WTC11 (cell line): ENCODE measurements at regions of chr14 and their contacts with region 1.

Region 1: DNA sequence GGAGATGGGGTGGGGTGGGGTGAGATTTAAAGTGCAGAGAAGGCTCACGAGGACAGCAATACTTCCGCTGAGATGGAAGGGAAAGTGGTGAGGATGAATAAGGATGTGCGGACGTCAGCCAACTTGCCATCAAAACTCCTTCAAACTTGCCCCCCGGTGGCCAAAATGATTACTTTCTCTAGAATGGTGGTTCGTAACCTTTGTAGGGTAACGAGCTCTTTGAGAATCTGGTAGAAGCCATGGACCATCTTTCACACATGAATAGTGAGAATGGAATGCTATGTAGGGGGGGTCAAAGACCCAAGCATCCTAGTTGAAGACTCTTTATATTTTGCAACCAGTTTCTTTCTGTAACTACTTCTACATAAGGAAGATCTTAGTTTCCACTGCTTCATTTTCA is 245.9 kb upstream of the DDHD1 start:
- DNase-seq: peak; percentile 58
- ATAC-seq: peak; percentile 83
- H3K4me3 Mint-ChIP-seq: no peak overlapping the region
- H3K27ac Mint-ChIP-seq: no peak overlapping the region
- H3K4me1 Mint-ChIP-seq: 0 out of 2 replicates have a peak, but pooled peaks cover 5% of the 10 kb centered on the region
- H3K27me3 Mint-ChIP-seq: peaks cover 8% of the 10 kb centered on the region
- CTCF ChIP-seq: no peak

Region 2: DNA sequence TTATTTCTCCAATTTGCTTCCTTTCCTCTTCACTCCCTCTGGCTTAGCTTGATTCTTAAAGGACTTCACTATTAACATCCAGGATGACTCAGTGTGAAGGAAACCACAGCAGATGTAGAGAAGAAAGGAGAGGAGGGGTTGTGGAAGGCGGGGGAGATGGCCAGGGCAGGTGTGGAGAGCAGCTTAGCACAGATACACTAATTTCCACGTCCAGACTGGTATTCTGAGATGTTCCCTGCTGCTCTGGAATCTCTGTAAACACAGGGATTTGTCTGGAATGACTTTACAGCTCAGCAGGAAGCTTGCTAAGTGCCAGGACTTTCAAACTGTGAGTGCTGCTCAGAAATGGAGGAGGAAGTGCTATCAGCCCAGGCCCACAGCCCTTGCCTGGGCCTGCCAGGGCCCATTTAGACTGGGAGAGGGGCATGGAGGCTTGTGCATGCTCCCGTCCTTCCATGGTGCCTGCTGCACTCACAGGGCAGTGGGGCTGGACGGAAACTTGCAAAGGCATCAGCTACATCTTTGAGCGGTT is 43.4 kb before region 1 on chr14:
- CTCF ChIA-PET with region 1: interaction called, 21 read pairs
- POLR2A ChIA-PET with region 1: no interaction called
- DNase-seq: peak; percentile 57
- ATAC-seq: peak; percentile 95
- H3K4me3 Mint-ChIP-seq: peak overlapping the region; percentile 12
- H3K27ac Mint-ChIP-seq: peak overlapping the region; percentile 98
- H3K4me1 Mint-ChIP-seq: peaks cover 41% of the 10 kb centered on the region
- H3K27me3 Mint-ChIP-seq: no peaks in the 10 kb centered on the region
- CTCF ChIP-seq: no peak